ENCODE measurements at regions of chr2 and their contacts with region 1.

Region 1: GRCh38 chr2:19369341-19369955 is 11.0 kb upstream of the OSR1 start:
- DNase-seq: no peak
- H3K4me3 ChIP-seq: no peak overlapping the region
- H3K27ac ChIP-seq: no peak overlapping the region
- H3K4me1 ChIP-seq: no peaks in the 10 kb centered on the region
- H3K27me3 ChIP-seq: peaks cover 2 to 17% (median 8%) of the 10 kb centered on the region in 4 experiments
- CTCF ChIP-seq: peak; percentile 17 to 74 (median 51)
- EP300 ChIP-seq: no peak
- POLR2A ChIP-seq: no peak
- RAD21 ChIP-seq: peak; percentile 76 to 83

Region 2: GRCh38 chr2:19667085-19667484 is 297.6 kb after region 1 on chr2:
- CTCF ChIA-PET with region 1: interaction called, 13 read pairs
- POLR2A ChIA-PET with region 1: no interaction called
- DNase-seq: no peak
- H3K4me3 ChIP-seq: no peak overlapping the region
- H3K27ac ChIP-seq: no peak overlapping the region
- H3K4me1 ChIP-seq: no peaks in the 10 kb centered on the region
- H3K27me3 ChIP-seq: no peaks in the 10 kb centered on the region
- CTCF ChIP-seq: peak in 2 of 3 experiments; percentile 18 to 20; a peak in 2 of 4 replicates
- EP300 ChIP-seq: no peak
- POLR2A ChIP-seq: no peak
- RAD21 ChIP-seq: peak; percentile 51 to 54

Region 3: DNA sequence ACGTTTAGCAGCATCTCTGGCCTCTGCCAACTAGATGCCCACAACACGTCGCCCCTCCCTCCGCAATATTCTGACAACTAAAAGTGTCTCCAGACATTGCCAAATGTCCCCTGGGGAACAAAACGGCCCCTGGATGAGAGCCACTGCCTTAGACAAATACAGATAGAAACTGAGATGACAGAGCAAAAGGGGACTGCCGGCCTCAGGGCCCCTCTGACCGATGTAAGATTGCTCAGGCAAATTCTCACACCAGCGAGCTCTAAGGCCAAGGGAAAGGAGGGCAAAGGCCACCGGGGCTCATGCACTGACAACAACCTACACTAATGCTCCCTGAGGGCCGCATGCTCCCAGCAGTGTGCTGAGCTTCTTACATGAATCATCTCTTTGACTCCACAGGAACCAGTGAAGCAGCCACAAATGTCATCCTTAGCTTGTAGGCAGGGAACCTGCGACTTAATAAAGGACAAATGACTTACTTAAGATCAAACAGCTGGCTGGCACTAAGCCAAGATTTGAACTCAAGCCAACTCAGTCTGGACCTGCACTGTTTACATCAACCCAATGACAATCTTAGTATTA is 303.9 kb after region 1 on chr2:
- CTCF ChIA-PET with region 1: interaction called, 24 read pairs
- POLR2A ChIA-PET with region 1: no interaction called
- DNase-seq: no peak
- H3K4me3 ChIP-seq: no peak overlapping the region
- H3K27ac ChIP-seq: no peak overlapping the region
- H3K4me1 ChIP-seq: no peaks in the 10 kb centered on the region
- H3K27me3 ChIP-seq: no peaks in the 10 kb centered on the region
- CTCF ChIP-seq: no peak
- EP300 ChIP-seq: no peak
- POLR2A ChIP-seq: no peak
- RAD21 ChIP-seq: no peak

Region 4: DNA sequence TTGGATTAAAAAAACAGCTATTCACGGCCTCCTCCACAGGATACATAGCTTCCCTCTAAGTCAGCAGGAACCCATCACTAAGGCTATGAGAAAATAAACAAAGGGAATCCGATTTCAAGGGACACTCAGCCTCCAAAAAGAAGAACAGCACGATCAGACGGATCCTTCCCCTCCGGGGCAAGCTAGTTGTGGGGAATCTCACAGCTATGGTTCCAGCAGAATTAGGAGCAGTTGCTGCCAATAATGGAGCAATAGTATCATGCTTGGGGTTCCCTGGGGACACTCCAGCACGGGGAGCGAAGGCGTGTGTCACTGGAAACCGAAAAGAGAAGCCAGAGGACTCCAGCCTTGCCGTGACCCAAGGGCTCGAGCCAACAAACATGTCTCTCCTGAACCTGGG is 369.3 kb after region 1 on chr2:
- CTCF ChIA-PET with region 1: interaction called, 55 read pairs
- POLR2A ChIA-PET with region 1: no interaction called
- DNase-seq: no peak
- H3K4me3 ChIP-seq: no peak overlapping the region
- H3K27ac ChIP-seq: no peak overlapping the region
- H3K4me1 ChIP-seq: no peaks in the 10 kb centered on the region
- H3K27me3 ChIP-seq: no peaks in the 10 kb centered on the region
- CTCF ChIP-seq: no peak
- EP300 ChIP-seq: no peak
- POLR2A ChIP-seq: no peak
- RAD21 ChIP-seq: no peak

Measured in H1 (cell line).